Right ventricle myocardium superior (tissue), 1 donor: ENCODE measurements at regions of chr10 and their contacts with region 1.

Region 1: GRCh38 chr10:32367793-32368453 is 21.0 kb upstream of the EPC1 start:
- DNase-seq: peak; percentile 58
- ATAC-seq: peak; percentile 71

Region 2: DNA sequence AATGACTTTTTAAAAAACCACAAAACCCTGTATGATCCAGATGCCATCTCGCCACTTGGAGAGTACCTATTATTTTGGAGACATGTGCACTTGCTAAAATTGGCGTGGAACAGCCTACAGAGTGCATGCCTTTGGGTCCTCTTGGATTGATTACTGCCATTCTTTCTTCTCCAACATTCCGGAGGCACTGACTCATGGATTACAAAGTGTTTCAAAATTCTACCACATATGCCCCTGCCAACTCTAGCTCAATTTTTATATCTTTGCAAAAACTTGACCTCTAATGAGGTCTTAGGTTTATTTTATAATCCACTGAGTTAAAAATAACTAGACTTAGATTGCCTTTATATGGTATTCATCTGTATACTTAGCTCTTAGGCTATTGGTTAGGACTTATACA is 255.9 kb before region 1 on chr10:
- intact Hi-C with region 1: no loop called
- DNase-seq: no peak
- ATAC-seq: peak; percentile 46

Region 3: GRCh38 chr10:32190890-32191491 is 176.9 kb before region 1 on chr10:
- intact Hi-C with region 1: loop called (anchors 10 kb)
- DNase-seq: no peak
- ATAC-seq: no peak

Region 4: DNA sequence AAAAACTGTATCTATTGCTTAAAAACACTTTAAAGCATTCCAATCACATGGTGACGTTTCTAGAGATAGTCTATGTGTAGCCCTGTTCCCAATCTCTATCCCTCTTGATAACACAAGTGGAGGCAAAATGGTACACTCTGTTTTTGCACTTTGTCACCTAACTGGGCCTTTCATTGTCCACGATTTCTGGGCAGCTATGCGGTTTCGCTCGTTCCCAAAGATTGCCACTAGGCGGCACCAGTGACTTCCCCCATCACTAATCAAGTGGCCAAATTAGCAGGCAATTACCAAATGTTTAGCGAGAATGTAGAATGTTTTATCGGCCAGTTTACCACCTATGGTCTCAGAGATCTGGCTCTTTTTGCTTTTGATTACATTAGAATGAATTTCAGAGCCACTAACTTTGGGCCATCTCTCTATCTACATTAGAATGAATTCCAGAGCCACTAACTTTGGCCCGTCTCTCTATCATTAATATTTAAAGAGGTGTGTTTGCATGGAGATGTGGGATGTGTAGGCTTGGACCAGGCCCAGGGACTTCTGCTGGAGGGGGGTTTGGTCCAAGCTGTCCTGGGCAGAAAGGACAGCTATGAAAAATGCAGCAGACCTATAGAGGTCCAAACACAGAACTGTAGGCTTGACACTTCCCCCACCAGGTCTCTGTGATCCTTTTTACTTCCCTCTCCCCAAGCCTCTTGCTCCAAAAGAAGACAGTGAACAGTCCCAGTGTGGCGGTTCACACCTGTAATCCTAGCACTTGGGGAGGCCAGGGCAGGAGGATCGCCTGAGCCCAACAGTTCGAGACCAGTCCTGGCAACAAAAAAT is 111.1 kb before region 1 on chr10:
- intact Hi-C with region 1: loop called (anchors 5 kb)
- DNase-seq: peak; percentile 74
- ATAC-seq: peak; percentile 83

Region 5: GRCh38 chr10:32298054-32298812 is 69.7 kb before region 1 on chr10:
- intact Hi-C with region 1: no loop called
- DNase-seq: no peak
- ATAC-seq: no peak